Activated T-helper 2 cell treated with anti-CD3 and anti-CD28 coated beads, Interferon-gamma antibody, Interleukin-2, Interleukin-4, amounts not matched to agents 10 μg/mL and 5 μg/mL and 100 μg/mL, durations not matched to agents 14 hours and 24 hours and 36 hours (primary cell): ENCODE measurements at regions of chr16 and their contacts with region 1.

Region 1: GRCh38 chr16:3282730-3283524 is at the start of gene ZNF263:
- DNase-seq: peak; percentile 93
- H3K4me3 Mint-ChIP-seq: peak within 1 kb of the TSS; percentile 98
- H3K27ac Mint-ChIP-seq: peak within 1 kb of the TSS; percentile 97
- H3K4me1 Mint-ChIP-seq: peaks cover 16% of the 10 kb centered on the region
- H3K27me3 Mint-ChIP-seq: peaks cover 3% of the 10 kb centered on the region
- total RNA-seq, gene ZNF263: 22.9 and 26.6 TPM in 2 replicates

Region 2: GRCh38 chr16:3158471-3159314 is 124.2 kb before region 1 on chr16:
- intact Hi-C with region 1: loop called (anchors 5 kb)
- DNase-seq: peak; percentile 85
- H3K4me3 Mint-ChIP-seq: peak overlapping the region; percentile 88
- H3K27ac Mint-ChIP-seq: peak overlapping the region; percentile 56
- H3K4me1 Mint-ChIP-seq: peaks cover 21% of the 10 kb centered on the region
- H3K27me3 Mint-ChIP-seq: peaks cover 21% of the 10 kb centered on the region

Region 3: GRCh38 chr16:3173892-3174617 is 108.9 kb before region 1 on chr16:
- intact Hi-C with region 1: no loop called
- DNase-seq: no peak
- H3K4me3 Mint-ChIP-seq: peak overlapping the region; percentile 67
- H3K27ac Mint-ChIP-seq: no peak overlapping the region
- H3K4me1 Mint-ChIP-seq: peaks cover 27% of the 10 kb centered on the region
- H3K27me3 Mint-ChIP-seq: peaks cover 76% of the 10 kb centered on the region

Region 4: DNA sequence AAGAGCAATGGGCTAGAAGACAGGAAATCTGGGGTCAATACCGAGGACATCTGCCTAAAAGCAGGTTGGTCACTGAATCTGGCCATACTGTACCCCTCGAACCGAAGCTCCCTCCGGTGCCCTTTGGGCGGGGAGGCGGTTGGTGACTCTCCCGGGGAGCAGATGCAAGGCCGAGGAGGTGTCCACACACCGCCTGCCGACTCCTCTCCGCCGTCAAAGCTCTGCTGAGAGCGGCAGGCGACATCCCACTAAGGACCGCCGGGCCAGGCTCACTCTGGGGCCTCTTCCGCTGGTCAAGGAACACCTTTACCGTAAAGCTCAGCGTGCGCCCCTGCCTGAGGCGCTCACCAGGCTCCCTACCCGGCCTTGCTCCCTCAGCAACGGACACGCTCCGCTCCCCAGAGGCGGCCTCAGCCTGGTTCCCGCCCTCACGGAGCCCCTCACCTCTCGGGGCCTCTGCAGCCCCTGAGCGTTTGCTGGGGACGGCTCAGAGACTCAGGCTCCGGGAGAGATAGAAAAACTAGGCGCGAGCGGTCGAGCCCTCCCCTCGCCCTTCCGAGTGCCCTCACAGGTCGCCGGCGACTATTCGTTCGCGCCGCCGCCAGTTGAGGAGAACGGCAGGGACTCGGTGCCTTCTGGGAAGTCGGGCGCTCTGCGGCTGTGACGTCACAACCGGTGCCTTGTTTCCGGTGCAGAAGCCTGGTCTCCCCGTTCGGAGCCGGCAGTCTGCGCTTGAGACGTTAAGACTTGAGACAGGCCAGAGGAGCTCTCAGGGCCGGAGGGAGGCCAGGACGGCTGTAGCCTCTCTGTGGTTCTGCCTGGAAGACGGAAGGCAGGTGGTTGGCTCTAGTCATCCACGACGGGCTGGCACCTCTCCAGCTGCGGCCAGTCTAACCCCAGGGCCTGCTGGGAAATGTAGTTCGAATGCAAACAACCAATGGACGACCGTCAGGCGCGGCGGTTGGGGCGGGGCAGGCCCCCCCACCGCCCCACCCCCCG is 48.1 kb before region 1 on chr16 and contains the start of gene ZNF200:
- intact Hi-C with region 1: loop called (anchors 1 kb)
- DNase-seq: peak; percentile 91
- H3K4me3 Mint-ChIP-seq: peak within 1 kb of the TSS; percentile 97
- H3K27ac Mint-ChIP-seq: peak within 1 kb of the TSS; percentile 91
- H3K4me1 Mint-ChIP-seq: peaks cover 15% of the 10 kb centered on the region
- H3K27me3 Mint-ChIP-seq: peaks cover 2% of the 10 kb centered on the region
- total RNA-seq, gene ZNF200: 11.0 and 12.2 TPM in 2 replicates

Region 5: GRCh38 chr16:3256146-3256865 is 26.6 kb before region 1 on chr16 and contains the start of gene MEFV:
- intact Hi-C with region 1: no loop called
- DNase-seq: no peak
- H3K4me3 Mint-ChIP-seq: no peak within 1 kb of the TSS
- H3K27ac Mint-ChIP-seq: no peak within 1 kb of the TSS
- H3K4me1 Mint-ChIP-seq: no peaks in the 10 kb centered on the region
- H3K27me3 Mint-ChIP-seq: peaks cover 3% of the 10 kb centered on the region
- total RNA-seq, gene MEFV: 0.18 TPM in 1 of 2 replicates, not detected in the other

Region 6: GRCh38 chr16:3305109-3306068 is 22.5 kb after region 1 on chr16 and contains the starts of genes TIGD7 and ZNF75A:
- intact Hi-C with region 1: loop called (anchors 2 kb)
- DNase-seq: peak; percentile 83
- H3K4me3 Mint-ChIP-seq: peak within 1 kb of the TSS; percentile 77
- H3K27ac Mint-ChIP-seq: peak within 1 kb of the TSS; percentile 78
- H3K4me1 Mint-ChIP-seq: peaks cover 8% of the 10 kb centered on the region
- H3K27me3 Mint-ChIP-seq: no peaks in the 10 kb centered on the region
- total RNA-seq, gene TIGD7: 2.5 and 3.6 TPM in 2 replicates
- total RNA-seq, gene ZNF75A: 25.4 and 31.8 TPM in 2 replicates

Region 7: GRCh38 chr16:3457434-3458252 is 174.7 kb after region 1 on chr16:
- intact Hi-C with region 1: loop called (anchors 5 kb)
- DNase-seq: peak; percentile 86
- H3K4me3 Mint-ChIP-seq: peak overlapping the region; percentile 80
- H3K27ac Mint-ChIP-seq: peak overlapping the region; percentile 70
- H3K4me1 Mint-ChIP-seq: peaks cover 35% of the 10 kb centered on the region
- H3K27me3 Mint-ChIP-seq: no peaks in the 10 kb centered on the region

Region 8: GRCh38 chr16:3596101-3596861 is 313.4 kb after region 1 on chr16:
- intact Hi-C with region 1: no loop called
- DNase-seq: no peak
- H3K4me3 Mint-ChIP-seq: no peak overlapping the region
- H3K27ac Mint-ChIP-seq: no peak overlapping the region
- H3K4me1 Mint-ChIP-seq: peaks cover 2% of the 10 kb centered on the region
- H3K27me3 Mint-ChIP-seq: no peaks in the 10 kb centered on the region